Psoas muscle (tissue), 8 donors: ENCODE measurements at regions of chr6 and their contacts with region 1.

Region 1: DNA sequence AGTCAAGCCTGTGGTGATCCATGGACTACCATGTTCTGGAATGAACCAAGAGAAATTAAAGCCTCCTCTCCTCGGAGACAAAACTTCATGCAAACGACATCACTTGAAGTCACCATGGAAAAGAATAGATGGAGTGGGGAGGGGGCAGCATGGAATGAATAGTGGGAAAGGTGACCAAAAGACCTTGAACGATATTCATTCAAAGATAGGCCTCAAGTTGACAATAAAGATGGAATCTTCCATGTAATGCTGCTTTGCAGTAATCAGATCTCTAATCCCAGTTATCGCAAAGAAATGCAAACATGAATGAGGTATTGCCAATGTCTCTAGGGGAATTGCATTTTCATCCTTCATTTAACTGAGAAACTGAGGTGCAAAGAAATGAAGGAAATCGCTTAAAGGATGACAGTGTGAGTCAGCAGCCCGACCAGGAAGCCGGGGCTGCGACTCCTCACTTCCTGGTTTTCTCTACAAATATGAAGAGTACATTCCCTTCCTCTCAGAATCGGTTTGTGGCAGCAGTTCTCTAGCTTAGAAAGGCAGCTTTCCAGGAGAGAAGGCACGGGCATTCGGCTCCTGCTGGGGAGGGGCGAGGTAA is 65.6 kb upstream of the RREB1 start:
- DNase-seq: no peak
- ATAC-seq: no peak
- H3K4me3 ChIP-seq: no peak overlapping the region
- H3K27ac ChIP-seq: peak overlapping the region; percentile 84
- H3K4me1 ChIP-seq: peaks cover 22% of the 10 kb centered on the region
- H3K27me3 ChIP-seq: no peaks in the 10 kb centered on the region
- CTCF ChIP-seq: no peak

Region 2: DNA sequence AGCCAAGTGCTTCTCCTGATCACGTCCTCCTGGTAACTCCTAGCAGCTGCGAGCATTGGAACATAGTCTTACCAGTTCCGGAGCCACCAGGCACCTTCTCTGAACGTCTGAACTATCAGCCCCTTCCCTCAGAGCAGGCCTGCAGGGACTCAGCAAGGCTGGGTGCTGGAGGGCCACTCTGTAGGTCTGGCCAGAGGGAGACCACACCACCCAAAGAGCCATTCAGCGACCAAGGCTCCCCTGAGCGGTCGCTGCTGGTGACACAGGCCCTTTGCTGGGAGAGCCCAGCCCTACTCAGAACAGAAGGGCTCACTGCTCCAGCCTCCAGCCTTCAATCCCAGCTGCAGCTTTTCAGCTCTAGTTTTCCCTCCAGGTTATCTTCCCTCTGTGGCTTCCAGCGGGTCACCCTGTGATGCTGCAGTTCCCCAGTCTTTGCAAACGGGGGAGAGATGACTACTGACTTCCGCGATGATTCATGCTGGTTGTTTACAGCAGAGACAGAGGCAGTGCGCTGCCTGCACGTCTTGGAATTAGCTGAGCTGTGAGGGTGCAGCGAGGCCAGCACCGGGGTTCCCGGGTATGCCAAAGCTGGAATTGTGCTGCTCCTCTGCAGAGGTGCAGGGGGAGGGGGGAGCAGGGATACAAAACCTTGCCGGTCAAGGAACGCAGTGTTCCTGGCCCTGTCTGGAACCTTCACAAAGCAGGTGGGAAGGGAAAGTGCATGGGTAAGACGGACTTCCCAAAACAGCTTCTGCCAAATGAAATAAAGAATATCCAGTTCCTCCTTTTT is 292.3 kb before region 1 on chr6:
- intact Hi-C with region 1: loop called in 1 of 2 experiments (anchors 5 kb)
- DNase-seq: peak; percentile 68 to 90
- ATAC-seq: peak; percentile 69 to 80 (median 73)
- H3K4me3 ChIP-seq: peak overlapping the region; percentile 56
- H3K27ac ChIP-seq: peak overlapping the region; percentile 95
- H3K4me1 ChIP-seq: peaks cover 49% of the 10 kb centered on the region
- H3K27me3 ChIP-seq: no peaks in the 10 kb centered on the region
- CTCF ChIP-seq: no peak

Region 3: GRCh38 chr6:6975459-6976111 is 66.6 kb before region 1 on chr6:
- intact Hi-C with region 1: loop called in 1 of 2 experiments (anchors 5 kb)
- DNase-seq: peak; percentile 26 to 76
- ATAC-seq: peak; percentile 94 to 95 (median 94)
- H3K4me3 ChIP-seq: no peak overlapping the region
- H3K27ac ChIP-seq: peak overlapping the region; percentile 92
- H3K4me1 ChIP-seq: peaks cover 21% of the 10 kb centered on the region
- H3K27me3 ChIP-seq: no peaks in the 10 kb centered on the region
- CTCF ChIP-seq: no peak

Region 4: GRCh38 chr6:6998194-6998569 is 44.0 kb before region 1 on chr6:
- intact Hi-C with region 1: loop called (anchors 5 kb)
- DNase-seq: peak; percentile 37 to 59
- ATAC-seq: peak; percentile 80 to 85 (median 82)
- H3K4me3 ChIP-seq: no peak overlapping the region
- H3K27ac ChIP-seq: peak overlapping the region; percentile 30
- H3K4me1 ChIP-seq: peaks cover 21% of the 10 kb centered on the region
- H3K27me3 ChIP-seq: no peaks in the 10 kb centered on the region
- CTCF ChIP-seq: no peak

Region 5: DNA sequence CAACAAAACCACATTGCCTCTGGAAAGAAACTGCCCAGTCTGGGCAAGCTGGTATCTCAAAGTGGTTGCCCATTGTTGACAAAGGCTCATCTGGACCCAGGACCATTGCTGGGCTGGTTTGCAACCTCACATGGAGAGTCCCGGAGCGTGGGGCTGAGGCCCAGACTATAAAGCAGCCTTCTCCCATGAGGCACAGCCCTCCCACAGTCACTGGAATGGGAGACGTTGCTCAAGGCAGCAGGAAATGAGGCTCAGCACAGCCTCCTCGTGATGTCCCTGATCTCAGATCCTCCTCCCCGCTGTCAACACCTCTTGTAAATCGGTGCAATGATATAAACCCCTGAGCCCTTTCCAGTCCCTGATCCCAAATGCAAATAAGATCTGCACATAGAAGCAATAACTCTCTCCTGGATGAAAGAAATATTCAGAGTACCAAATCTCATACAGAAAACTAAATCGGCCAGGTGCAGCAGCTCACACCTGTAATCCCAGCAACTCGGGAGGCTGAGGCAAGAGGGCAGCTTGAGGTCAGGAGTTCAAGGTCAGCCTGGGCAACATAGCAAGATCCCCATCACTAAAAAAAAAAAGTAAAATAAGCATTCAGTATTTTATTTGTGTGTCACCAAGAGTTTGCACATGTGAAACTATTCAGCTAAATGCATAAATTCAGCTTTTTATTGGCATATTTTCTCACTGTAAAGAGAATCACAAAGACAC is 37.4 kb before region 1 on chr6:
- intact Hi-C with region 1: loop called (anchors 5 kb)
- DNase-seq: no peak
- ATAC-seq: peak in 2 of 4 donors; percentile 58 to 75
- H3K4me3 ChIP-seq: no peak overlapping the region
- H3K27ac ChIP-seq: no peak overlapping the region
- H3K4me1 ChIP-seq: peaks cover 5% of the 10 kb centered on the region
- H3K27me3 ChIP-seq: no peaks in the 10 kb centered on the region
- CTCF ChIP-seq: no peak

Region 6: DNA sequence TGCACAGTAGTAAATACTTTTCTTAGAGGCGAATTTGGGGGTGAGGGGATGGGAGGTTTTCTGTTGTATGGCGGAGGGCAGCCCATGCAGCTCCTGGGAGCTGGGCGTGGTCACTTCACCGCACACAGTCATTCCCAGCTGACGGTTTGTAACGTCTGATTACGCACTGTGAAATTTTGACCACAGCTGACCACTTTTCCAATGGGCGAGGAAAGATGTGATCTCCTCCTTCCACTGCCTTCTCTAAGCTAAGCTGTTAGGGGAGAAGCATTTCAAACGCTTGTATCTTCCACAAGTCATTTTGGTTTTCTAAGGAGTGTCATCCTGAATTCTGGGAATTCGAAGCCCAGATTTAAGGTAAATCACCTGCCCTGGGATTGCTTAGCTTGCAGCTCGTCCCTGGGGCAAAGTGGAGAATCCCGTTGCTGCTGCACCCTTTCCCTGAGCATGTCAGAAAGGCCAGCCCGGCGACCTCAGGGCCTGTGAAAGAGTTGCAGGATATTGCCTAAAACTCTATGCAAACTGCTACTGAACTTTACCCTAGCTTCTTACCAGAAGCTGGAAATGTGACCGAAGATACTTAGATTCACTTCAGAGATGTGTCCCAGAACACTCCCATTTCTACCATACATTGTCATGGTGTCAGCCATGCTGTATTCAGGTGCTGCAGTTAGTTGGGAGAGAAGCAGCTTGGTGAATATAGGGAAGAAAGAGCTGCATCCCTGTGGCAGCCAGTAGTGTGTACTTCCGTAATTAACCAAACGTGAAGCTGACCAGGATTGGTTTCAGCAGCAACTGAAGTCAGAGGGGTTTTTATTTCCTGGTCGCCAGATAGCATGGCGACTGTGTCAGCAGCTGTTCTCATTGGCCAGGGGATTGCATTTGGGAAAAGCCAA is 124.5 kb after region 1 on chr6:
- intact Hi-C with region 1: no loop called
- DNase-seq: no peak
- ATAC-seq: peak in 2 of 4 donors; percentile 34 to 35
- H3K4me3 ChIP-seq: no peak overlapping the region
- H3K27ac ChIP-seq: peak overlapping the region; percentile 81
- H3K4me1 ChIP-seq: peaks cover 83% of the 10 kb centered on the region
- H3K27me3 ChIP-seq: no peaks in the 10 kb centered on the region
- CTCF ChIP-seq: no peak